ENCODE measurements at regions of chr1 and their contacts with region 1.

Region 1: GRCh38 chr1:40363721-40364120 is 9.8 kb upstream of the SMAP2 start:
- DNase-seq: peak; percentile 78
- ATAC-seq: peak; percentile 100
- H3K4me3 ChIP-seq: no peak overlapping the region
- H3K4me3 Mint-ChIP-seq: peak overlapping the region; percentile 27
- H3K27ac ChIP-seq: peak overlapping the region in 1 of 2 donors; percentile 18
- H3K27ac Mint-ChIP-seq: peak overlapping the region; percentile 74
- H3K4me1 ChIP-seq: peaks cover 12 to 13% of the 10 kb centered on the region in 2 donors
- H3K4me1 Mint-ChIP-seq: peaks cover 13% of the 10 kb centered on the region
- H3K27me3 ChIP-seq: no peaks in the 10 kb centered on the region
- H3K27me3 Mint-ChIP-seq: no peaks in the 10 kb centered on the region
- CTCF ChIP-seq: peak; percentile 54

Region 2: GRCh38 chr1:40344597-40344996 is 19.1 kb before region 1 on chr1:
- CTCF ChIA-PET with region 1: interaction called, 21 read pairs
- POLR2A ChIA-PET with region 1: no interaction called
- intact Hi-C with region 1: no loop called
- DNase-seq: peak; percentile 68
- ATAC-seq: peak; percentile 89
- H3K4me3 ChIP-seq: peak overlapping the region in 4 of 5 experiments; percentile 27 to 62 (median 36)
- H3K4me3 Mint-ChIP-seq: peak overlapping the region; percentile 68
- H3K27ac ChIP-seq: peak overlapping the region; percentile 42 to 71
- H3K27ac Mint-ChIP-seq: peak overlapping the region; percentile 60
- H3K4me1 ChIP-seq: peaks cover 35 to 36% of the 10 kb centered on the region in 2 donors
- H3K4me1 Mint-ChIP-seq: peaks cover 54% of the 10 kb centered on the region
- H3K27me3 ChIP-seq: no peaks in the 10 kb centered on the region
- H3K27me3 Mint-ChIP-seq: no peaks in the 10 kb centered on the region
- CTCF ChIP-seq: no peak

Region 3: GRCh38 chr1:40385437-40386358 is 22.0 kb after region 1 on chr1:
- CTCF ChIA-PET with region 1: interaction called, 36 read pairs
- POLR2A ChIA-PET with region 1: interaction called, 7 read pairs
- intact Hi-C with region 1: loop called (anchors 2 kb)
- DNase-seq: peak; percentile 94
- ATAC-seq: peak; percentile 73
- H3K4me3 ChIP-seq: peak overlapping the region; percentile 30 to 70 (median 31)
- H3K4me3 Mint-ChIP-seq: peak overlapping the region; percentile 87
- H3K27ac ChIP-seq: peak overlapping the region; percentile 99 to 100
- H3K27ac Mint-ChIP-seq: peak overlapping the region; percentile 97
- H3K4me1 ChIP-seq: peaks cover 94 to 98% of the 10 kb centered on the region in 2 donors
- H3K4me1 Mint-ChIP-seq: peaks cover 91% of the 10 kb centered on the region
- H3K27me3 ChIP-seq: no peaks in the 10 kb centered on the region
- H3K27me3 Mint-ChIP-seq: no peaks in the 10 kb centered on the region
- CTCF ChIP-seq: no peak

Region 4: DNA sequence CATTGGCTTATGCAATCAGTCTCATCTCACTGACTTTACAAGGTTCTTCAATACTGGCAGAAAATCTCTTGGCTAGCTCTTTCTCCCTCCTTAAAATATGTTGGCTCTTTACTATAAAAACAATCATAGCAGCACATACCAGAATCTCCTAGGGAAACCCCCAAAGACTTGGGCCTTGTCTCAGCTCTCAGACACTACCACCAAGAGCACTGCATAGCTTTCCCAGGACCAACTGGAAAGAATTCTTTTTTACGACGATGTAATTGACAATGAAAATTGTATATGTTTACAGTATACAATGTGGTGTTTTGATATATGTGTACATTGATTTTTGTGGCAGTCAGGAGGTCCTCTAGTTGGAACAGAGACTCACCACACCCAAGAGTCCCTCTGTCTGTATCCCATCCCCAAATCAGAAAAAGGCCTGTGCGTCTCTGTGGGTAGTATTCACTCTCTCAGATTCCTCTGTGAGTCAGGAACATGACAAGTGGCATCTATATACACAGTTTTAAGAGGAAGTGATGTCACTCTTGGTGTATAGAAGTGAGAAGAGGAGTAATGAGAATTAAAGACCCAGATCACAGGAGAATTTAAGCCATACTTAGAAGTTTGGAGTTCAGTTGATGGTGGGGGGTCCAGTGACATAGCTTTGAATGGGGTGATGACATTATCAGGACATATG is 30.9 kb after region 1 on chr1:
- CTCF ChIA-PET with region 1: interaction called, 13 read pairs
- POLR2A ChIA-PET with region 1: no interaction called
- intact Hi-C with region 1: no loop called
- DNase-seq: peak; percentile 58
- ATAC-seq: peak; percentile 32
- H3K4me3 ChIP-seq: peak overlapping the region in 1 of 5 experiments; percentile 35
- H3K4me3 Mint-ChIP-seq: peak overlapping the region; percentile 76
- H3K27ac ChIP-seq: peak overlapping the region; percentile 99 to 100
- H3K27ac Mint-ChIP-seq: peak overlapping the region; percentile 93
- H3K4me1 ChIP-seq: peaks cover 96 to 99% of the 10 kb centered on the region in 2 donors
- H3K4me1 Mint-ChIP-seq: peaks cover 91% of the 10 kb centered on the region
- H3K27me3 ChIP-seq: no peaks in the 10 kb centered on the region
- H3K27me3 Mint-ChIP-seq: no peaks in the 10 kb centered on the region
- CTCF ChIP-seq: no peak